Activated B cell treated with CpG ODN at 0.5 μM for 24 hours (primary cell): ENCODE measurements at regions of chr20 and their contacts with region 1.

Region 1: DNA sequence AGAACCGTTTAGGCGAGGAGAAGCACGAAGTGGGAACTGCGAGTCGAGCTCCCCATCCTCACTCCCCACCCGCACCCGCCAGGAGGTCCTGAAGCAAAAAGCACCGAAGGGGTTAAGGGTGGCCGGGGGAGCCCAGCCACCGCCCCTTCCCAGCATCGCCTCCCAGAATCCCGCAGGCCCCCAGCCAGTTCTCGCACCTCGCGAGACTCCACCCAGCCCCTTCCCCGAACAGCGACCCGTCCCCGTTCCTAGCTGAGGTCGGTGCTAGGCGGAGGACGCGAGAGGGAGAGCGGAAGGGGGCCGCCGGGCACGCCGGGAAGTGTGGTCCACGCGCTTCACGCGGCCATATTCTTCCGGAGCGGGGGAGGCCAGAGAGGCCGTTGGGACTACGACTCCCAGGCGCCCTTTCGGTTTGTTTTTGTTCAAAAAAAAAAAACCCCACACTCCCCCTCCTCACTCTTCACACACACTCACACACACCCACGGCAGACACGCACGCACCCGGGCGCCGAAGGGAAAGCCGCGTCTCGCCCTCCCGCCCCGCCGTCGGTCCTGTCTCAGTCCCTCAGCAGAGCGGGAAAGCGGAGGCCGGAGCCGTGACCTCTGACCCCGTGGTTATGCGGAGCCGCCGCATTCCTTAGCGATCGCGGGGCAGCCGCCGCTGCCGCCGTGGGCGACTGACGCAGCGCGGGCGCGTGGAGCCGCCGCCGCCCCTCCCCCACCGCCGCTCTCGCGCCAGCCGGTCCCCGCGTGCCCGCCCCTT is at the start of gene ASXL1:
- DNase-seq: peak; percentile 94
- ATAC-seq: peak; percentile 81
- H3K4me3 Mint-ChIP-seq: peak within 1 kb of the TSS; percentile 98
- H3K27ac Mint-ChIP-seq: peak within 1 kb of the TSS; percentile 100
- H3K4me1 Mint-ChIP-seq: peaks cover 76% of the 10 kb centered on the region
- H3K27me3 Mint-ChIP-seq: no peaks in the 10 kb centered on the region
- CTCF ChIP-seq: no peak
- total RNA-seq, gene ASXL1: 145 and 169 TPM in 2 replicates

Region 2: DNA sequence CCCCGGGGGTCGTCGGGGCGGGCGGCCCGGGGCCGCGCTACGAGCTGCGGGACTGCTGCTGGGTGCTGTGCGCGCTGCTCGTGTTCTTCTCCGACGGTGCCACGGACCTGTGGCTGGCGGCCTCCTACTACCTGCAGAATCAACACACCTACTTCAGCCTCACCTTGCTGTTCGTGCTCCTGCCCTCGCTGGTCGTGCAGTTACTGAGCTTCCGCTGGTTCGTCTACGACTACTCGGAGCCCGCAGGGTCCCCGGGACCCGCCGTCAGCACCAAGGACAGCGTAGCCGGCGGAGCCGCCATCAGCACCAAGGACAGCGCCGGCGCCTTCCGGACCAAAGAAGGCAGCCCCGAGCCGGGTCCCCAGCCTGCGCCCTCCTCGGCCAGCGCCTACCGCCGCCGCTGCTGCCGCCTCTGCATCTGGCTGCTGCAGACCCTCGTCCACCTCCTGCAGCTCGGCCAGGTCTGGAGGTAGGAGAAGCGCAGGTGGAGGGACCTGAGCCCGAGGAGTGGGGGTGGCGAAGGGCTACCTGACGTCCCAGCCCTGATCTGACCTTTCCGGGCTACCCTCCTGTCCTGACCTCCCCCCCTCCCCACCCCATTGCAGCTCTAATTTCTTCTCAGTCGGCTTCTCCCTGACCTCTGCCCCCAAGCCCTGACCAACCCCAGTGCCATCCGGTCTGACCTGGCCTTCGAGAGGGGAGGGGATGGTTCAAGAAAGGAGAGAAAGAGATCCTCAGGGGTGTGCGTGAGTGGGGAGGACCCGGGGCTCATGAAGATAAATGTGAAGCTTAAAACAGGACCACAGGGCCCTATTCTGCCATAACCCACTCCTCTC is 389.5 kb before region 1 on chr20:
- CTCF ChIA-PET with region 1: no interaction called
- POLR2A ChIA-PET with region 1: no interaction called
- intact Hi-C with region 1: no loop called
- DNase-seq: peak; percentile 86
- ATAC-seq: peak; percentile 99
- H3K4me3 Mint-ChIP-seq: peak overlapping the region; percentile 85
- H3K27ac Mint-ChIP-seq: peak overlapping the region; percentile 12
- H3K4me1 Mint-ChIP-seq: peaks cover 14% of the 10 kb centered on the region
- H3K27me3 Mint-ChIP-seq: peaks cover 45% of the 10 kb centered on the region
- CTCF ChIP-seq: no peak

Region 3: DNA sequence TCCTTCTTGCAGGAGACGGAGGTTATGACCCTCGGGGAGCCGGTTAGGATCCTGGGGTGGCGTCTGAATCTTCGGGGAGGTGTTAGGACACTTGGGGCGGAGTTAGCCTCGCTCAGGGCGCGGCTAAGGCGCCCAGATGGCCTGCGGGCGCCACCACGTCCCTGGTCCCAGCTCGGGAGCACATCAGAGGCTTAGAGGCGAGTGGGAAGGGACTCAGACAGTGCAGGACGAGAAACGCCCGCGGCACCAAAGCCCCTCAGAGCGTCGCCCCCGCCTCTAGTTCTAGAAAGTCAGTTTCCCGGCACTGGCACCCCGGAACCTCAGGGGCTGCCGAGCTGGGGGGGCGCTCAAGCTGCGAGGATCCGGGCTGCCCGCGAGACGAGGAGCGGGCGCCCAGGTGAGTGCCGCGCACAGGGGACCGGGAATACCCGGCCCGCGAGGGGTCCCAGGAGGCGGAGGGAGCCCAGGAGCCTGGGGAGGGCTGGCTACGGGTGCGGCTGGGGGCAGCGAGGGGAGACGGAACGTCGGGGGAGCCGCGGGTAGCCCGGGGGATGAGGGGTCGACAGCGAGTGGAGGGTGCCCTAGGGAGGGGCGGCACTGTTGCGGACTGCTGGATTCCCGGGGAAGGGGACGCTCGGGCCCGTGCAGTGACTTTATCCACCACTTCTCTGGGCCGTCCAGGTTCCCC is 305.8 kb before region 1 on chr20 and contains the start of gene HCK:
- CTCF ChIA-PET with region 1: no interaction called
- POLR2A ChIA-PET with region 1: interaction called, 3 read pairs
- intact Hi-C with region 1: loop called (anchors 5 kb)
- DNase-seq: peak; percentile 46
- ATAC-seq: peak; percentile 54
- H3K4me3 Mint-ChIP-seq: peak within 1 kb of the TSS; percentile 93
- H3K27ac Mint-ChIP-seq: peak within 1 kb of the TSS; percentile 93
- H3K4me1 Mint-ChIP-seq: peaks cover 54% of the 10 kb centered on the region
- H3K27me3 Mint-ChIP-seq: no peaks in the 10 kb centered on the region
- CTCF ChIP-seq: no peak
- total RNA-seq, gene HCK: 183 TPM in 2 replicates

Region 4: DNA sequence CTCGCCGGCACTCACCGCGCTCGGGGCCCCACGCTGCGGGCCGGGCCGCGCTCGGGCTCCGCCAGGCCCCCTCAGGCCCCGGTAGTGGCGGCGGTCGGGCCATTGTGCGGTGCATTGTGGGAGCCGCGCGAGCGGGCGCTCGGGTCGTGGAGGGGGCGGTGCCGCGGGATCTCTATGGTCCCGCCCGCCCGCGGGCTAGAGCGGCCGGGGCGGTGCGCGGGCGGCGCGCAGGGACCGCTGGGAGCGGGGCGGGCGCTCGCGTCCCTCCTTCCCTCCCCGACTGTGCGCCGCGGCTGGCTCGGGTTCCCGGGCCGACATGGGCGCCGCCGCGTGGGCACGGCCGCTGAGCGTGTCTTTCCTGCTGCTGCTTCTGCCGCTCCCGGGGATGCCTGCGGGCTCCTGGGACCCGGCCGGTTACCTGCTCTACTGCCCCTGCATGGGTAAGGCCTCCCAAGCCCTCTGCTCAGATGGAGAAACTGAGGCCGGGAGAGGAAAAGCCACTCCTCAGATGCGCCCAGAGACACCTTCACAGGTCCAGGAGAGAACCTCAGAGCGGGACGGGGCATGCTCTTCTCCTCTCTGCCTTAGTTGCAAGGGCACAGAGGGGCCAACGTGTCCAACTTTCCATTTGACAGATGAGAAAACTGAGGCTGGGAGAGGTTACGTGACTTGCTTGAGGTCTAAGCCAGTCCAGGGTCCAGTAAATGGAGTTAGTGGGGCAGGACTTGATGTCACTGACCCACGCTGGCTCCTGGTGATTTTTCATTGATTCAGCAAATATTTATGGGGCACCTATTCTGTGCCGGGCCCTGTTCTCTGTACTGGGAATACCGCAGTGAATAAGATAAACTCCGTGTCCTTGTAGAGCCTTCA is 150.2 kb before region 1 on chr20 and contains the starts of genes PLAGL2 and POFUT1:
- CTCF ChIA-PET with region 1: no interaction called
- POLR2A ChIA-PET with region 1: interaction called, 3 read pairs
- intact Hi-C with region 1: loop called (anchors 1 kb)
- DNase-seq: peak; percentile 92
- ATAC-seq: peak; percentile 97
- H3K4me3 Mint-ChIP-seq: peak within 1 kb of the TSS; percentile 91
- H3K27ac Mint-ChIP-seq: peak within 1 kb of the TSS; percentile 85
- H3K4me1 Mint-ChIP-seq: peaks cover 62% of the 10 kb centered on the region
- H3K27me3 Mint-ChIP-seq: no peaks in the 10 kb centered on the region
- CTCF ChIP-seq: no peak
- total RNA-seq, gene PLAGL2: 17.3 and 17.9 TPM in 2 replicates
- total RNA-seq, gene POFUT1: 20.4 and 24.0 TPM in 2 replicates

Region 5: DNA sequence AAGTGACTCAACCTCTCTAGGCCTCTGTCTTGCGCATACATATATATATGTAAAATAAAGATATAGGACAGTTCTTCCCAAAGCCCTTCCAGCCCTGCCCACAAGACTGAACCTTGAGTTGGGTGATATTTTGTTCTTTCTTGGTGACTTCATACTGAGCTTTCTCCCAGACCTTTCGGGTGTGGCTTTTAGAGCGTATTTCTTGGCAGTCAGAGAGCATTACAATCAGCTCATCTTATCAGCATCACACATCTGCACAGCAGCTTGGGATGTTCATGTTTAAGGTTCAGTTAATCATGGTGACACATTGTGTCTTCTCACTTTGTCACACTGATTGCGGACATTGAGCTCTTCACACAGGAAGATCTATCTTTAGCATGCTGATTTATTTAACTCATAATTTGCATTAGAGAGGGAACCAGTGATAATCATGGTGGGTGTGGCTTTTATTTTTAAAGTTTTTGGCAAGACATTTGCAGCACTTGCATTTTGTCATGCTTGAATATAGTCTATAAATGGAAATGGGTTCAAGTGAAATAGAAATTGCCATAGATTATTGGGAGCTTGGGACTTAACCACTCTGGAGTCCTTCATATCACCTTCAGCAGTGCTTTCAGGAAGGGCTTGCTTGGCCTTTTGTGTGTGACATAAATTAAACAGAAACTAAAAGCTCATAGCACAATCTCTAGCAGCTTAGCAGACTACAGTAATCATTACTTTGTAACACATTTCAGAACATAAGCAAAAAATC is 72.3 kb before region 1 on chr20:
- CTCF ChIA-PET with region 1: interaction called, 4 read pairs
- POLR2A ChIA-PET with region 1: interaction called, 35 read pairs
- intact Hi-C with region 1: loop called (anchors 1 kb)
- DNase-seq: no peak
- ATAC-seq: peak; percentile 79
- H3K4me3 Mint-ChIP-seq: peak overlapping the region; percentile 70
- H3K27ac Mint-ChIP-seq: peak overlapping the region; percentile 89
- H3K4me1 Mint-ChIP-seq: peaks cover 86% of the 10 kb centered on the region
- H3K27me3 Mint-ChIP-seq: no peaks in the 10 kb centered on the region
- CTCF ChIP-seq: no peak

Region 6: GRCh38 chr20:32368925-32369324 is 10.9 kb after region 1 on chr20:
- CTCF ChIA-PET with region 1: no interaction called
- POLR2A ChIA-PET with region 1: interaction called, 35 read pairs
- intact Hi-C with region 1: loop called (anchors 1 kb)
- DNase-seq: no peak
- ATAC-seq: peak; percentile 76
- H3K4me3 Mint-ChIP-seq: peak overlapping the region; percentile 52
- H3K27ac Mint-ChIP-seq: peak overlapping the region; percentile 70
- H3K4me1 Mint-ChIP-seq: peaks cover 54% of the 10 kb centered on the region
- H3K27me3 Mint-ChIP-seq: no peaks in the 10 kb centered on the region
- CTCF ChIP-seq: no peak

Region 7: GRCh38 chr20:32484958-32485769 is 127.1 kb after region 1 on chr20:
- CTCF ChIA-PET with region 1: no interaction called
- POLR2A ChIA-PET with region 1: interaction called, 6 read pairs
- intact Hi-C with region 1: loop called (anchors 5 kb)
- DNase-seq: no peak
- ATAC-seq: peak; percentile 80
- H3K4me3 Mint-ChIP-seq: peak overlapping the region; percentile 86
- H3K27ac Mint-ChIP-seq: peak overlapping the region; percentile 69
- H3K4me1 Mint-ChIP-seq: peaks cover 14% of the 10 kb centered on the region
- H3K27me3 Mint-ChIP-seq: no peaks in the 10 kb centered on the region
- CTCF ChIP-seq: peak; percentile 82